ENCODE measurements at regions of chr6 and their contacts with region 1.

Region 1: GRCh38 chr6:39166189-39166911 is 51.4 kb upstream of the SAYSD1 start:
- DNase-seq: peak; percentile 79 to 99
- H3K4me3 ChIP-seq: no peak overlapping the region
- H3K27ac ChIP-seq: no peak overlapping the region
- H3K4me1 ChIP-seq: no peaks in the 10 kb centered on the region
- H3K27me3 ChIP-seq: no peaks in the 10 kb centered on the region
- CTCF ChIP-seq: peak; percentile 98 to 100 (median 98)
- EP300 ChIP-seq: no peak
- POLR2A ChIP-seq: no peak
- RAD21 ChIP-seq: peak; percentile 99 to 100

Region 2: DNA sequence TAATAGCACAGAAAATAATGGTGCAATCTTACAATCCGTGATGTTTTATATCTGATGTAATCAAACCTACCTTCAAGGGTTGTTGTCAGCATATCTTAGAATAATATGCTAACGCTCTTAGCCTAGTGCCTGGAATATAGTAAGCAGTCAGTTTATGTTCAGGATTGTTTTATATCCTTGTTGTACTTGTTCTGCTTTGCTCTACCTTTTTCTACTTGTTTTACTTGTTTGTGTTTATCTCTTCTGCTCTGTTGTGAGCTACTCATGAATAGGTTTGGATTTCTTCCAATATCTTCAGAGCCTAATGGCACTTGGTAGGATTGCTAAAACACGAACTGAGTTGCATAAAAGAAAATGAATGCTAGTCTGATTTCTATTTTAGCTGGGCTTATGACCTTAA is 411.2 kb before region 1 on chr6:
- CTCF ChIA-PET with region 1: no interaction called
- POLR2A ChIA-PET with region 1: no interaction called
- DNase-seq: no peak
- H3K4me3 ChIP-seq: no peak overlapping the region
- H3K27ac ChIP-seq: no peak overlapping the region
- H3K4me1 ChIP-seq: no peaks in the 10 kb centered on the region
- H3K27me3 ChIP-seq: no peaks in the 10 kb centered on the region
- CTCF ChIP-seq: no peak
- EP300 ChIP-seq: no peak
- POLR2A ChIP-seq: no peak
- RAD21 ChIP-seq: no peak

Region 3: DNA sequence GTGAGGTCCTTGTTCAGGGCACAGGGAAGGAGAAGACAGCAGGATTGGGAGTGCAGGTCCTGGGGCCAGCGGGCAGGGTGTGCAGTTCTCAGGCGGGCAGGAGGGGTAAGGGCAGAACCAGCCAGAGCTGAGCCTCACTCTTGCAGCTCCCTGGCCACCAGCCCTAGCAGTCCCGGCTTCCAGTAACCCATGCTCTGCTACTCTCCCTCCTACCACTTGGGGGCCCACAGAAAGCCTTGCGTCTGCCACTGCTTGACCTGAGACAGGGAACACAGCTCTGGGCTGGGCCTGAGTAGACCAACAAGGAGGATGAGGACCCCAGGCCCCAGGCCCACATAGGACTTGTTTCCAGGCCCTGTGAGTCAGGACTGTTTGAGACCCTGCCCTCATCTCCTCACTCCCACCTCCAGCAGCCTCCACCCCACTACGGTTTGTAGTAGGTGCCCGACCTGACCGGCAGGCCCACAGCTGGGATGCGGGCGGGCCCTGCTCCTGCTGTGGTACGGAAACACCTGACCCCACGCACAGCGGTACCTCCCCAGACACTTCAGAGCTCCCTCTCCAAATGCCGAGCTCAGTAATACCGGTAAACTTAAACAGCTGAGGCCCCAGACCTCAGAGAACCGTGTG is 23.7 kb after region 1 on chr6:
- CTCF ChIA-PET with region 1: interaction called, 165 read pairs
- POLR2A ChIA-PET with region 1: no interaction called
- DNase-seq: peak; percentile 27 to 79
- H3K4me3 ChIP-seq: no peak overlapping the region
- H3K27ac ChIP-seq: no peak overlapping the region
- H3K4me1 ChIP-seq: no peaks in the 10 kb centered on the region; a peak in 2 of 7 replicates
- H3K27me3 ChIP-seq: no peaks in the 10 kb centered on the region
- CTCF ChIP-seq: peak in 2 of 3 experiments; percentile 84 to 89; a peak in 3 of 4 replicates
- EP300 ChIP-seq: no peak
- POLR2A ChIP-seq: no peak
- RAD21 ChIP-seq: peak; percentile 78 to 84

Region 4: DNA sequence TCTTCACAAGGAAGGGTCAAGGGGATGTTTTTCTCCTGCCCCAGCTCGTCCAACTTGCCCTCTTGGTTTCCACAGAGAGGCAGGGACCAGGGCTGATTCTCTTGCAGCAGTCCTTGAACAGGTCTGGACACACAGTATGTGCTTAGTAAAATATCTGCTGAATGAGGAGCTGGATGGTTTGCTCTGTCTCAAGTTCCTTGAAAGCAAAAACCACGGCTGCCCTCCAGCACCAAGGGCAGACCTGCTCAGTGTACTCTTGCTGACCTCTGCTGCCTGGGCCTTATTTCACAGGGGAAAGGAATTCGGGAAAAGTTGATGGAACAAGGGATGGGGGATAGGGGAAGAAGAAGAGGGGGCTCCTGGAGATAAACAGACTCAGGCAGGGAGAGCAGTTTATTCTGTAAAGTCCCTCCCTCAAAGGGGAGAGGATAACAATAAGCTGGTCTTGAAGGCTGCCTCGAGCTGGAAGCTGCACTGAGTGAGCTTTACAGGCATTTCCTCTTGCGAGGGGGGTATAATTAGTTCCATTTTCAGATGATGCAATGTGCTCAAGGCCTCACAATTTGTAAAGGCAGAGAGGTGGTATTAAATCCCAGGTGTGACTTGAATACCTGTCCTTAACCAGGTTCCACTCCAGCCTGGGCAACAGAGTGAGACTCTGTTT is 52.7 kb after region 1 on chr6:
- CTCF ChIA-PET with region 1: interaction called, 12 read pairs
- POLR2A ChIA-PET with region 1: no interaction called
- DNase-seq: no peak
- H3K4me3 ChIP-seq: no peak overlapping the region
- H3K27ac ChIP-seq: no peak overlapping the region
- H3K4me1 ChIP-seq: peaks cover 7 to 30% (median 16%) of the 10 kb centered on the region in 4 experiments
- H3K27me3 ChIP-seq: no peaks in the 10 kb centered on the region
- CTCF ChIP-seq: peak in 1 of 3 experiments; percentile 10; a peak in 1 of 4 replicates
- EP300 ChIP-seq: no peak
- POLR2A ChIP-seq: no peak
- RAD21 ChIP-seq: peak; percentile 10 to 48; a peak in 3 of 4 replicates

Region 5: GRCh38 chr6:39256294-39256940 is 90.1 kb after region 1 on chr6:
- CTCF ChIA-PET with region 1: interaction called, 13 read pairs
- POLR2A ChIA-PET with region 1: no interaction called
- DNase-seq: peak in 1 of 2 experiments; percentile 21
- H3K4me3 ChIP-seq: no peak overlapping the region
- H3K27ac ChIP-seq: no peak overlapping the region
- H3K4me1 ChIP-seq: peaks cover 0 to 10% (median 4%) of the 10 kb centered on the region in 4 experiments; a peak in 3 of 7 replicates
- H3K27me3 ChIP-seq: no peaks in the 10 kb centered on the region
- CTCF ChIP-seq: no peak
- EP300 ChIP-seq: no peak
- POLR2A ChIP-seq: no peak
- RAD21 ChIP-seq: no peak

Region 6: GRCh38 chr6:39289490-39289889 is 123.1 kb after region 1 on chr6:
- CTCF ChIA-PET with region 1: interaction called, 10 read pairs
- POLR2A ChIA-PET with region 1: no interaction called
- DNase-seq: no peak
- H3K4me3 ChIP-seq: no peak overlapping the region
- H3K27ac ChIP-seq: no peak overlapping the region
- H3K4me1 ChIP-seq: peaks cover 0 to 12% (median 10%) of the 10 kb centered on the region in 4 experiments; a peak in 6 of 7 replicates
- H3K27me3 ChIP-seq: peaks cover 0 to 9% (median 1%) of the 10 kb centered on the region in 4 experiments; a peak in 3 of 7 replicates
- CTCF ChIP-seq: no peak
- EP300 ChIP-seq: no peak
- POLR2A ChIP-seq: no peak
- RAD21 ChIP-seq: no peak

Measured in H1 (cell line).